Dendritic cell treated with granulocyte-macrophage colony-stimulating factor and Interleukin-4, amounts not matched to agents 40 ng/mL and 50 ng/mL, for 4 days (primary cell): ENCODE measurements at regions of chr9 and their contacts with region 1.

Region 1: DNA sequence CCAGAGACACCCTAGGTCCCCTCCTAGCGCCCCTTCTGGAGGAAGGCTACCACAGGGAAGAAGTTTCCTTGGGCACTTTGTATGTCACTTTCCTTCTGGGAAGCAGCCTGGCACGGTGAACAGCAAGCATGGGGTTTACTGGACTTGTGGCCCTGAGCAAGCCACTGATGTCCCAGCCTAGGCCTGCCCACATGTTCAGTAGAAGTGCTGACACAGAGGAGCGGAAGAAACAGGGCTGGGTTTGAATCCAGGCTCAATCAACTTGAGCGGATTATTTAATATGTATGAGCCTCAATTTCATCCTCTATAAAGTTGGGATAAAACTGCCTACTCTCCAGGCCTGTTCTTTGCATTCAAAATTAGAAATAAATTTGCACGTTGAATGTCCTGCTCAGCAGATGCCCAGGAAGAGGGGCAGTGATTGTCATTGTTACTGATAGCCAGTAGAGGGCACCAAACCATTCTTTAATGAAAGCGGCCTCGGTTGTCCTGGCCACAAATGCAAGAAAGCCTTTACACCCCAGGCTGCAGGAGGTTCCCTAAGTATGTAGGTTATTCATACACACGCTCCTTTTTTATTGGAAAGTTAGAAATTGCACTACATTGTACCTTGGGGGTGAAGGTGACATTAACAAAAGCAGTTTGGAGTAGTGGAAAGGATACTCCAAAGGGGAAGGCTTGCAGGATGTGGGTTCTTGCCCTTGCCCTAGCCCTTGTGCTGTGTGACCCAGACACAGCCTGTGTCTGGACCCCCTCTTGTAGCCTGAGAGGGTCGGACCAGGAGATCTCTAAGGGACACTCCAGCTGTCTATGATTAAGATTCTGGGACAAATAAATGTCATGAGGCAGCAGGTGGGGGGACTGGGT is 13.4 kb upstream of the XPA start:
- H3K4me3 Mint-ChIP-seq: no peak overlapping the region
- H3K27ac Mint-ChIP-seq: no peak overlapping the region
- H3K4me1 Mint-ChIP-seq: peaks cover 3% of the 10 kb centered on the region
- H3K27me3 Mint-ChIP-seq: peaks cover 51% of the 10 kb centered on the region

Region 2: GRCh38 chr9:97721396-97721795 is 10.8 kb after region 1 on chr9:
- intact Hi-C with region 1: no loop called
- H3K4me3 Mint-ChIP-seq: no peak overlapping the region
- H3K27ac Mint-ChIP-seq: no peak overlapping the region
- H3K4me1 Mint-ChIP-seq: no peaks in the 10 kb centered on the region
- H3K27me3 Mint-ChIP-seq: peaks cover 28% of the 10 kb centered on the region

Region 3: GRCh38 chr9:97900738-97901565 is 190.4 kb after region 1 on chr9:
- intact Hi-C with region 1: loop called (anchors 10 kb)
- H3K4me3 Mint-ChIP-seq: no peak overlapping the region
- H3K27ac Mint-ChIP-seq: no peak overlapping the region
- H3K4me1 Mint-ChIP-seq: peaks cover 26% of the 10 kb centered on the region
- H3K27me3 Mint-ChIP-seq: no peaks in the 10 kb centered on the region